GM12878 (cell line): ENCODE measurements at regions of chr17 and their contacts with region 1.

Region 1: DNA sequence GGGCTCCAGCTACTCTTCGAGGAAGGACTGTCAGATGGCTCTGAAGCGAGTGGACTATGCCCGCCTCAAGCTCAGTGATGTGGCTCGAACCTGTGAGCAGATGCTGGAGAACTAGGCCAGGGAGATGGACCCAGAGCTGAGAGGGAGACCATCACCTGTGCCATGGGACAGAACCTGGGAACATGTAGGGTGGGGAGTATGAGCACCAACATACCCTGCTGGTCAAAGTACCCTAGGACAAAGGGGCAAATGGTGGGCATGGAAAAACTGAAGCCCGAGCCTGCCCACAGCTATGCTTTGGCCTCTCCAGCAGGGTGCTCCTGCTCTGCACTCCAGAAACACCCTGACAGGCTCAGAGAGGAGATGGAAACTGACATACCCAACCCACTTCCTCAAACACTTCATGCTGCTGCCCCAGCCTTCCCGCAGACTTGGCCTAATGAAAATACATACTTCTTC is 1.9 kb downstream of the MED11 start:
- DNase-seq: no peak
- ATAC-seq: peak; percentile 71
- H3K4me3 ChIP-seq: no peak overlapping the region
- H3K27ac ChIP-seq: no peak overlapping the region
- H3K4me1 ChIP-seq: peaks cover 18% of the 10 kb centered on the region
- H3K27me3 ChIP-seq: 0 out of 4 replicates have a peak, but pooled peaks cover 0 to 1% of the 10 kb centered on the region in 2 experiments
- CTCF ChIP-seq: peak; percentile 52 to 68 (median 58)
- EP300 ChIP-seq: no peak
- POLR2A ChIP-seq: no peak
- RAD21 ChIP-seq: peak; percentile 63

Region 2: DNA sequence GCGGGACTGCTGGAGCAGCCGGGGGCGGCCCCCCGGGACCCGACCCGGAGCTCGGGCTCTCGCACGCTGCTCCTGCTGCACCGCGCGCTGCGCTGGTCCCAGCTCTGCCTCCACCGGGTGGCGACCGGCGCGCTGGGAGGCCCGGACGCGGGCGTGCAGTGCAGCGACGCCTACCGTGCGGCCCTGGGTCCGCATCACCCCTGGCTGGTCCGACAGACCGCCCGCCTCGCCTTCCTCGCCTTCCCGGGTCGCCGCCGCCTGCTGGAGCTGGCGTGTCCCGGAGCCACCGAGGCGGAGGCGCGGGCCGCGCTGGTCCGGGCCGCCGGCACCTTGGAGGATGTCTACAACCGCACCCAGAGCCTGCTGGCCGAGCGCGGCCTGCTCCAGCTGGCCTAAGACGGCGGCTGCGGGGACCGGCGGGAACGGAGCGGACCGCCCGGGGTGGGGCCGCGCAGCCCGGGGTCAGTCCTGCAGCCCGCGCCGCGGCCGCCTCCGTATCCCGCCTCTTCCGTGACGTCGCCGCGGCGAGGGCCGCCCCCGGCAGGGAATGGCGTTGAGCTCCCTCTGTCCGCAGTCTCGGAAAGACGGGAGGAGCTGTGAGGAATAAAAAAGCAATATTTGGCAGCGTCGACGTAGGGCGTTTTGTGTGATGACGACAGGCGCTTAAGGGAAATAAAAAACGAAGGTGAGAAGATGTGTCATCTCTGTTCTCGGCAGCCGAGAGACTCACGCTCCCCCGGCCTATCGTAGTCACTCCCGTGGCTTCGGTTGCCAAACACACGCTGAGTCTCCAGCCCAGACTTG is 57.0 kb after region 1 on chr17:
- CTCF ChIA-PET with region 1: interaction called, 16 read pairs
- POLR2A ChIA-PET with region 1: no interaction called
- RAD21 ChIA-PET with region 1: interaction called, 8 read pairs
- SMC1A ChIA-PET with region 1: interaction called, 6 read pairs
- in situ Hi-C with region 1: no loop called
- intact Hi-C with region 1: loop called (anchors 10 kb)
- DNase-seq: no peak
- ATAC-seq: peak; percentile 98
- H3K4me3 ChIP-seq: peak overlapping the region; percentile 79
- H3K27ac ChIP-seq: peak overlapping the region; percentile 39; the same call in 1 of the 2 replicates
- H3K4me1 ChIP-seq: peaks cover 12% of the 10 kb centered on the region
- H3K27me3 ChIP-seq: peaks cover 16 to 18% of the 10 kb centered on the region in 2 experiments
- CTCF ChIP-seq: peak; percentile 71 to 86 (median 81)
- EP300 ChIP-seq: no peak
- POLR2A ChIP-seq: peak; percentile 76
- RAD21 ChIP-seq: peak; percentile 38; the same call in 1 of the 2 replicates

Region 3: DNA sequence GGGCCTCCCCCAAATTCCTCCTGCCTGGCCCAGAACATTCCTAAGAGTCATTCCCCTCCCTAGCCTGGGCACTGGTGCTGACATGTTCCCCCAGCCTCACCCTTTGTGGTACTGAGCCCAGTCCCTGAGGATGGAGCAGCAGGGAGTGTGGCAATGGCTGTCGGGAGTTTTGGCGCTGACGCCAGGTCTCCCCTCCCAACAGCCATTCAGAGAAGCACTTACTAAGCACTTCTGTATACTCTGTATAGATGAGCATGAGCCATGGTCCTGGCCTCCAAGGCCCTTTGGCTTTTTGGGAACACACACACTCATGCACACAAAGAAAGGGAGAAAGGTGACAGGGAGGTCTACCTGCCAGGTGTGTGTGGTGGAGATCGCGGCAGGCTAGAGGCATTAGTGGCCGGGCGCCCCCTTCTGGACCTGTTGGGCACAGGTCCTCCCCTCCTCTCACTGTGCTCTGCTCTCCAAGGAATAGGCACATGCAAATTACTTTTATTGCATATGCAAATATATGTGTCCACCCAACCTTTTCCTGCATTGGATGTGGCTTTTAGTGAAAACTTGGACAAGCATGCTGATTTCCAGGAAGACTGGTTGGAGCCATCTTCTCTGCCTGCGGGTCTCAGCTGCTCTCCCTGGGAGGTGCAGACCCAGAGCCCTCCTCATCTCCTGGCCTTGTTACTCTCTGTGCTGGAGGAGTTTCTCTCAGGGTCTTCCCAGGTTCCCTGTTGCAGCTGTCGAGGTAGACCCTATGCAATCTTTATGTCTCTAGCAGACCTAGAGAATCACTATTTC is 148.9 kb after region 1 on chr17:
- CTCF ChIA-PET with region 1: interaction called, 11 read pairs
- POLR2A ChIA-PET with region 1: no interaction called
- RAD21 ChIA-PET with region 1: interaction called, 3 read pairs
- SMC1A ChIA-PET with region 1: interaction called, 4 read pairs
- in situ Hi-C with region 1: no loop called
- intact Hi-C with region 1: loop called (anchors 1 kb)
- DNase-seq: no peak
- ATAC-seq: peak; percentile 96
- H3K4me3 ChIP-seq: no peak overlapping the region
- H3K27ac ChIP-seq: no peak overlapping the region
- H3K4me1 ChIP-seq: no peaks in the 10 kb centered on the region
- H3K27me3 ChIP-seq: no peaks in the 10 kb centered on the region
- CTCF ChIP-seq: peak; percentile 84 to 88 (median 87)
- EP300 ChIP-seq: no peak
- POLR2A ChIP-seq: no peak
- RAD21 ChIP-seq: peak; percentile 65

Region 4: DNA sequence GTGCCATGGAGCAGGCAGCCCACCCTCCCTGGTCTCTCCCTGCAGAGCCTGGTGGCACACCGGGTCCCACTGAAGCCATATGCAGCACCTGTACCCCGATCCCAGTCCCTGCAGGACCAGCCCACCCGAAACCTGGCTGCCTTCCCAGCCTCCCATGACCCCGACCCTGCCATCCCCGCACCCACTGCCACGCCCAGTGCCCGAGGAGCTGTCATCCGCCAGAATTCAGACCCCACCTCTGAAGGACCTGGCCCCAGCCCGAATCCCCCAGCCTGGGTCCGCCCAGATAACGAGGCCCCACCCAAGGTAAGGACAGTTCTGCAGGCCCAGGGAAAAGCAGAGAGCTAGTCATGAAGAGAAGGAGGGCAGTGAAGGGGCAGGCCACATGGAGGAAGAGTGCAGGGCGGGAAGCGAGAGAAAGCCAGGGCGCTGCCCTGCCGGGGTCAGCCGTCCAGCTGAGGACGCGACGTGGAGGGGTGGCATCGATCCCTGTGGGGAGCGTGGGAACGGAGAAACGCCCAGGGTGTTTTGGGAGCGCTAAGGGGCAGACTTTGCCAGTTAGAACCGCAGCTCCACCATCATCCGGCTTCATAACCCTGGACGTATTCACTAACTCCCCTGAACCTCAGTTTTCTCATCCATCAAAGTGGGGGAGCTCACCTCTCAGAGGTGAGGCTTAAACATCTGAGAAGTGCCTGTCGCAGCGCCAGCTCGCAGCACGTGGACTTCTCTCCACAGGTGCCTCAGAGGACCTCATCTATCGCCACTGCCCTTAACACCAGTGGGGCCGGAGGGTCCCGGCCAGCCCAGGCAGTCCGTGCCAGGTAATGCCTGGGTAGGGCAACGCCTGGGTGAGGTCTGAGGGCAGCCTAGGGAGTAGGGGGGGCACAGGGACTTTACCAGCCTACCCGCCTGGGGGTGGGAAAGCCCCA is 158.6 kb after region 1 on chr17:
- CTCF ChIA-PET with region 1: interaction called, 5 read pairs
- POLR2A ChIA-PET with region 1: no interaction called
- RAD21 ChIA-PET with region 1: no interaction called
- SMC1A ChIA-PET with region 1: no interaction called
- in situ Hi-C with region 1: no loop called
- intact Hi-C with region 1: loop called (anchors 1 kb)
- DNase-seq: no peak
- ATAC-seq: no peak
- H3K4me3 ChIP-seq: no peak overlapping the region
- H3K27ac ChIP-seq: no peak overlapping the region
- H3K4me1 ChIP-seq: no peaks in the 10 kb centered on the region
- H3K27me3 ChIP-seq: no peaks in the 10 kb centered on the region
- CTCF ChIP-seq: no peak
- EP300 ChIP-seq: no peak
- POLR2A ChIP-seq: peak; percentile 38; the same call in 1 of the 2 replicates
- RAD21 ChIP-seq: no peak

Region 5: GRCh38 chr17:4903051-4903818 is 170.1 kb after region 1 on chr17 and contains the start of gene CHRNE:
- CTCF ChIA-PET with region 1: no interaction called
- POLR2A ChIA-PET with region 1: no interaction called
- RAD21 ChIA-PET with region 1: no interaction called
- SMC1A ChIA-PET with region 1: interaction called, 4 read pairs
- in situ Hi-C with region 1: no loop called
- intact Hi-C with region 1: loop called (anchors 5 kb)
- DNase-seq: peak; percentile 37
- ATAC-seq: peak; percentile 80
- H3K4me3 ChIP-seq: no peak within 1 kb of the TSS
- H3K27ac ChIP-seq: no peak within 1 kb of the TSS
- H3K4me1 ChIP-seq: peaks cover 20% of the 10 kb centered on the region
- H3K27me3 ChIP-seq: no peaks in the 10 kb centered on the region; a peak in 2 of 4 replicates
- CTCF ChIP-seq: peak; percentile 73 to 81 (median 77)
- EP300 ChIP-seq: no peak
- POLR2A ChIP-seq: no peak
- RAD21 ChIP-seq: peak; percentile 51
- polyA plus RNA-seq, gene CHRNE: 0.05 TPM in 1 of 2 experiments, not detected in the other